Dorsolateral prefrontal cortex (tissue), 120 donors: ENCODE measurements at regions of chr4 and their contacts with region 1.

Region 1: DNA sequence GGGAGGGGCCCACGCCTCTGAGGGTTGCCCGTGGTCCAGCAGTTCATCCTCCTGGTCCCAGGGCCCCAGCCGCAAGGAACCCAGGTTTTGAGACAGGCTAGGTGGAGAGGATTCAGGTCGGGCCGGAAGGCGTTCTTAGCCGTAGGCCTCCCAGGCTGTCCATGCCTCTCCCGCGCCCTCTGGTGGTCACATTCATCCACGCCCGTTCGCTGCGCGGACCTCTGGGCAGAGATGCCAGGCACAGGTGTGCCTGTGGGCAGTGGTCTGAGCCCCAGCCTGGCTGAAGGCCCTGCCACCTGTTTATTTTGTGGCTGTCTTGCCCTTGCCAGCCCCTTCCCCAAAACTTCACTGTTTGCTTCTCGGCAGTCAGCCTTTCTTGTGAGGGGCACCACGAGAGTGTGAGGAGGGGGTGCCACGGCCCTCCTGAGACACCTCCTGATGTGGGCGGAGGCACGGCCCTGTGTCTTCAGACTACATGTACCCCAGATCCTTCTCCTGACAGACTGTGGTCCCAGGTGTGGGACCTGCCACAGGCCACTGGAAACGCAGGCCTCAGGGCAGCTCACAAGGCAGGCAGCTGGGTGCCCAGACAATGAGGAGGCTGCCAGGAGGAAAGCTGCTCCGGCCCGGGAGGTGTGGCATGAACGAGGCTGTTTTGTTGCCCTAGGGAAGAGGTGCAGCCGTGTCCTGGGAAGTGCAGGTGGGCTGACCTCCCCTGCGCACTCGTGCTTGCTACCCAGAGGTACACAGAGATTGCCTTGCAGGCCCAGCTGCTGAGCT is 5.0 kb downstream of the UVSSA start:
- DNase-seq: peak; percentile 70 to 91 (median 80)
- H3K4me3 ChIP-seq: peak overlapping the region in 5 of 59 donors; percentile 3 to 28 (median 17)
- H3K27ac ChIP-seq: peak overlapping the region in 16 of 59 donors; percentile 2 to 75 (median 28)
- H3K27me3 ChIP-seq: no peaks in the 10 kb centered on the region
- CTCF ChIP-seq: peak; percentile 67 to 98 (median 92)

Region 2: GRCh38 chr4:646460-646859 is 705.6 kb before region 1 on chr4:
- intact Hi-C with region 1: no loop called
- DNase-seq: peak in 1 of 10 donors; percentile 70
- H3K4me3 ChIP-seq: peak overlapping the region in 26 of 59 donors; percentile 5 to 54 (median 30)
- H3K27ac ChIP-seq: peak overlapping the region in 8 of 59 donors; percentile 13 to 76 (median 32)
- H3K27me3 ChIP-seq: peaks cover 0 to 8% (median 0%) of the 10 kb centered on the region in 45 donors
- CTCF ChIP-seq: peak in 10 of 56 donors; percentile 10 to 31 (median 16)

Region 3: GRCh38 chr4:1130316-1131186 is 221.5 kb before region 1 on chr4:
- intact Hi-C with region 1: loop called (anchors 2 to 10 kb)
- DNase-seq: peak in 9 of 10 donors; percentile 54 to 80 (median 73)
- H3K4me3 ChIP-seq: peak overlapping the region in 2 of 59 donors; percentile 26 to 33
- H3K27ac ChIP-seq: peak overlapping the region in 2 of 59 donors; percentile 4
- H3K27me3 ChIP-seq: no peaks in the 10 kb centered on the region
- CTCF ChIP-seq: peak; percentile 89 to 100 (median 99)

Region 4: DNA sequence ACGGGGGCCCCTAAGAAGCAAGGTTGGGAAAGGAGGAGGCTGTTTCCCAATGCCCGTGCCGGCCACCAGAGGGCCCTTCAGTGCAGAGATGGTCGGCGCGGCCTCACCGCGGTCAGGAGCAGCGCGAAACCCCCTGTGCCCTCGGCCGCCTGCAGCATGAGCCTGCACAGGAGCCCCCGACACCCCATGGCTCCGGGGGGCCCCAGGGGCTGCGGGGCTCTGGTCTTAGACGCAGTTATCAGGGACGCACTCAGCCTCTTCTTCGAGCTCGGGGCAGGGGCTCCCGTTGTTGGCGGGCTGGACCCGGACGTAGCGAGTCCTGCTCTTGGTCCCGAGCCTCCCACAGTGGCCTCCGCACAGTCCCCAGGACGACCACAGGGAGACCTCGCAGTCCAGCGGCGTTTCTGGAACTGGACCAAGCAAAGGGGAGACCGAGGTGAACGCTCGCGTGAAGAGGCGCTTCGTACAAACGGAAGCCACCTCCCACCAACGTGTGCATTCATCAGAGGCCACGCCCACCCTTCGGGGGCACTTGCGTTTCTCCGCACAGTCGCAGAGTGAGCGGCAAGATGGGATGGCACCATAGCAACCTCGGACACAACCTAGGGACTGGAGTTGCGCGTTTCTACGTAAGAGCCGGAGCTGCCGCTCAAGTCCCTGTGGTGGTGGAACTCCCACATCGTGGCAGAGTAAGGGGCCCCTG is 184.6 kb before region 1 on chr4:
- intact Hi-C with region 1: loop called (anchors 2 to 10 kb)
- DNase-seq: peak in 9 of 10 donors; percentile 71 to 86 (median 77)
- H3K4me3 ChIP-seq: peak overlapping the region; percentile 49 to 98 (median 68)
- H3K27ac ChIP-seq: peak overlapping the region in 2 of 59 donors; percentile 21 to 74
- H3K27me3 ChIP-seq: peaks cover 0 to 35% (median 27%) of the 10 kb centered on the region in 45 donors
- CTCF ChIP-seq: peak; percentile 65 to 96 (median 91)

Region 5: GRCh38 chr4:1512738-1513660 is 161.0 kb after region 1 on chr4:
- intact Hi-C with region 1: loop called in 1 of 2 experiments (anchors 5 kb)
- DNase-seq: peak in 2 of 10 donors; percentile 17 to 52
- H3K4me3 ChIP-seq: peak overlapping the region in 42 of 59 donors; percentile 2 to 64 (median 38)
- H3K27ac ChIP-seq: peak overlapping the region in 10 of 59 donors; percentile 8 to 87 (median 70)
- H3K27me3 ChIP-seq: peaks cover 0 to 52% (median 20%) of the 10 kb centered on the region in 45 donors
- CTCF ChIP-seq: peak in 53 of 56 donors; percentile 12 to 79 (median 54)

Region 6: GRCh38 chr4:1628892-1629698 is 277.1 kb after region 1 on chr4:
- intact Hi-C with region 1: loop called in 1 of 2 experiments (anchors 1 kb)
- DNase-seq: peak in 9 of 10 donors; percentile 54 to 83 (median 67)
- H3K4me3 ChIP-seq: no peak overlapping the region
- H3K27ac ChIP-seq: peak overlapping the region in 2 of 59 donors; percentile 40 to 65
- H3K27me3 ChIP-seq: no peaks in the 10 kb centered on the region
- CTCF ChIP-seq: peak; percentile 71 to 99 (median 96)

Region 7: GRCh38 chr4:1726146-1726934 is 374.3 kb after region 1 on chr4:
- intact Hi-C with region 1: loop called (anchors 2 to 5 kb)
- DNase-seq: peak; percentile 86 to 98 (median 92)
- H3K4me3 ChIP-seq: no peak overlapping the region
- H3K27ac ChIP-seq: peak overlapping the region in 22 of 59 donors; percentile 6 to 68 (median 36)
- H3K27me3 ChIP-seq: no peaks in the 10 kb centered on the region
- CTCF ChIP-seq: peak; percentile 80 to 100 (median 97)